Dendritic cell treated with granulocyte-macrophage colony-stimulating factor and Interleukin-4, amounts not matched to agents 40 ng/mL and 50 ng/mL, for 4 days (primary cell): ENCODE measurements at regions of chrX and their contacts with region 1.

Region 1: DNA sequence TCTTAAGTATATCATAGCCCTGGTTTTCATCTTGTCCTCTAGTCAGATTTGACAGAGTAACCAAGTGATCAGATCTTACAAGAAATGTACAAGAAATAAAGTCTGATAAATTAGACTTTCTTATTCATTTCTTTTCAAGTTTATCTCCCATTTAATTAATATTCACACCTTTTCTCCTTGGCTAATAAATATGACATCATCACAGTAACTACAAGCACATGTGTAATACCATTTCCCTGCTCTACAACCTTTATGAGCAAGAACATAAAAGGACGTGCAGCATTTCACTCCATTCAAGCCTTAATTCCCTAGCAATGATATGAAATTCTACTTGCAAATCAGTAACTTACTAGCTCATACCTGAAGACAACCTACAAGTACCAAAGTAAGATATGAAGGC is 88.5 kb downstream of the BRWD3 start:
- H3K4me3 Mint-ChIP-seq: no peak overlapping the region
- H3K27ac Mint-ChIP-seq: no peak overlapping the region
- H3K4me1 Mint-ChIP-seq: no peaks in the 10 kb centered on the region
- H3K27me3 Mint-ChIP-seq: no peaks in the 10 kb centered on the region

Region 2: GRCh38 chrX:80792205-80792604 is 71.0 kb after region 1 on chrX:
- intact Hi-C with region 1: loop called (anchors 10 kb)
- H3K4me3 Mint-ChIP-seq: no peak overlapping the region
- H3K27ac Mint-ChIP-seq: no peak overlapping the region
- H3K4me1 Mint-ChIP-seq: no peaks in the 10 kb centered on the region
- H3K27me3 Mint-ChIP-seq: no peaks in the 10 kb centered on the region